ENCODE measurements at regions of chr20 and their contacts with region 1.

Region 1: GRCh38 chr20:35303735-35304491 is 11.7 kb upstream of the FAM83C start:
- DNase-seq: peak; percentile 81 to 89
- ATAC-seq: peak; percentile 70
- H3K4me3 ChIP-seq: no peak overlapping the region
- H3K27ac ChIP-seq: no peak overlapping the region
- H3K4me1 ChIP-seq: peaks cover 0 to 3% of the 10 kb centered on the region in 2 donors
- H3K27me3 ChIP-seq: no peaks in the 10 kb centered on the region

Region 2: DNA sequence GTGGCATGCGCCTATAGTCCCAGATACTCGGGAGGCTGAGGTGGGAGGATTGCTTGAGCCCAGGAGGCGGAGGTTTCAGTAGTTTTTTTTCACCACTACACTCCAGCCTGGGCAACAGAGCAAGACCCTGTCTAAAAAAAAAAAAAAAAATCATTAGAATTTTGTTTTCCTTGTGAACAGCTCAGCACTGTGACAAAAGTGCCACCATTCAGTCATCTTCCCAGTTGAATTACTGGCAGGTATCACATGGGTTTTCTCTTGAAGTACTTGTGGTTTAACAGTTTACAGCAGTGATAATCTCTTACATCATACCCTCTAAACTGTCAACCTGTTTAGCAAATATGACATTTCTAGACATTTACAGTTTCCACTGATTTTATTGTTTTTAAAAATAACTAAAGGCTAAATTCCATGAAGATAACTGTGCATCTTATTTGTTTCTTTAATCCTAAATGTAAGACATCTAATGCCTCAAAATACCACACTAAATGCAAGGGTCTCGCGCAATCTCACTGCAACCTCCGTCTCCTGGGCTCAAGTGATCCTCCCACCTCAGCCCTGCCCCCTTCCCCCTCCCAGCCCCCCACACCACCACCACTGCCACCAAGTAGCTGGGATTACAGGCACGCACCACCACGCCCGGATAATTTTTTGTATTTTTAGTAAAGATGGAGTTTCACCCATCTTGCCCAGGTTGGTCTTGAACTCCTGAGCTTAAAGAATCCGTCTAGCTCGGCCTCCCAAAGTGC is 218.3 kb before region 1 on chr20:
- intact Hi-C with region 1: no loop called
- DNase-seq: no peak
- ATAC-seq: no peak
- H3K4me3 ChIP-seq: no peak overlapping the region
- H3K27ac ChIP-seq: no peak overlapping the region
- H3K4me1 ChIP-seq: peaks cover 0 to 2% of the 10 kb centered on the region in 2 donors
- H3K27me3 ChIP-seq: no peaks in the 10 kb centered on the region

Region 3: DNA sequence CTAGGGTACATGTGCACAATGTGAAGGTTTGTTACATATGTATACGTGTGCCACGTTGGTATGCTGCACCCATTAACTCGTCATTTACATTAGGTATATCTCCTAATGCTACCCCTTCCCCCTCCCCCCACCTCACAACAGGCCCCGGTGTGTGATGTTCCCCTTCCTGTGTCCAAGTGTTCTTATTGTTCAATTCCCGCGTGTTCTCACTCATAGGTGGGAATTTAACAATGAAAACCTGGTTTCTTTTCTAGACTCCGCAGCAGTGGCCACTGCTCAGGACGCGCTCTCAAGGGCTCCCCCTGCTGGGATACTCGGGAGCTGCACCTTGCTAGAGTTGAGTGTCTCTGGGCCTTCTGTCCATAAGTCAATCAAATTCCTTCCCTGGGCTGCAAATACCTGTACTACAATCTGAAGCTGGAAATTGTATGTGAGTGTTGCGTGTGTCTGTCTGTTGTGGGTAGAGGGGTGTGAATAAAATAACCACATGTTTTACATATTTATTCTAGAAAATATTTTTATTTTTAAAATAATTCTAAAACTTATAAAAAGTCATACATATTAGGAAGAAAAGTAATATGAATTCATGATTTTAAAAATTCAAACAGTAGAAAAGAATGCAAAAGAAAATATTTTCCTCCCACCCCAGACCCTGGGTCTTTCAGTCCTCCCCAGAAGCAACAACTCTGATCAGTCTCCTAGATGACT is 143.3 kb after region 1 on chr20:
- intact Hi-C with region 1: loop called (anchors 2 kb)
- DNase-seq: peak; percentile 87 to 95
- ATAC-seq: peak; percentile 87
- H3K4me3 ChIP-seq: no peak overlapping the region
- H3K27ac ChIP-seq: no peak overlapping the region
- H3K4me1 ChIP-seq: no peaks in the 10 kb centered on the region
- H3K27me3 ChIP-seq: no peaks in the 10 kb centered on the region

Measured in aorta (tissue), 5 donors.